ENCODE measurements at regions of chr9 and their contacts with region 1.

Region 1: DNA sequence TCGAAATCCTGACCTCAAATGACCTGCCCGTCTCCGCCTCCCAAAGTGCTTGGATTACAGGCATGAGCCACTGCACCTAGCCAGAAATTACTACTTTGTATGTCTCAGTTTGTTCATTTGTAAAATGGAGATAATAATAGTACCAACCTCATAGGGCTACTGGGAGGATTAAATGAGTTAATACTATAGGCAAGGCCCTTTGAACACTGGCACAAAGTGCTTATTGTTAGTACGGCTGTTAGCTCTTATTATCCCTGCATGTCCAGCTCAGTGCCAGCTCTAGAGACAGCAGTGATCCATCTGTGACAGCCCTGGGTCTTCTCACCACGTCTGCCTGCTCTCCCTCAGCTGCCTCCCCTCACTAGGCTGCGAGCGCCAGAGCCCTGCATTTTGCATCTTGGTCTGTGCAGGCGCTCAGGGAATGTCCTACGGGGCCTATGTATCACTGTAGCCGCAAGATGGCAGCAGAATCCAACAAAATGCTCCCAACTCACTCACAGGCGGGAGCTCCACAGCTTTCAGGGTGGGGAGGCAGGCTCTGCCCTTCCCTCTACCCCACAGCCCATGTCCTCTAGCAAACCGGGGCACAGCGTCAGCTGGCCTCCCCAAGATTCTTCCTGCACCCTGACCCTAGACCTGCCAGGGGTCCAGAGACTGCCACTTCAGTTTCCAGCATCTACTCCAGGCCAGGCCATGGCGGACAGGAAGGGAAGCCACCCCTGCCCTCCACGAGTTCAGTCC is 17.7 kb upstream of the AKNA start:
- DNase-seq: peak; percentile 79 to 87
- H3K4me3 ChIP-seq: no peak overlapping the region
- H3K27ac ChIP-seq: no peak overlapping the region
- H3K4me1 ChIP-seq: peaks cover 0 to 5% (median 0%) of the 10 kb centered on the region in 4 donors
- H3K27me3 ChIP-seq: no peaks in the 10 kb centered on the region
- CTCF ChIP-seq: peak; percentile 80 to 88

Region 2: GRCh38 chr9:114151426-114151955 is 254.0 kb before region 1 on chr9:
- intact Hi-C with region 1: no loop called
- DNase-seq: no peak
- H3K4me3 ChIP-seq: no peak overlapping the region
- H3K27ac ChIP-seq: no peak overlapping the region
- H3K4me1 ChIP-seq: peaks cover 0 to 26% (median 24%) of the 10 kb centered on the region in 4 donors
- H3K27me3 ChIP-seq: peaks cover 0 to 45% of the 10 kb centered on the region in 2 donors
- CTCF ChIP-seq: no peak

Region 3: DNA sequence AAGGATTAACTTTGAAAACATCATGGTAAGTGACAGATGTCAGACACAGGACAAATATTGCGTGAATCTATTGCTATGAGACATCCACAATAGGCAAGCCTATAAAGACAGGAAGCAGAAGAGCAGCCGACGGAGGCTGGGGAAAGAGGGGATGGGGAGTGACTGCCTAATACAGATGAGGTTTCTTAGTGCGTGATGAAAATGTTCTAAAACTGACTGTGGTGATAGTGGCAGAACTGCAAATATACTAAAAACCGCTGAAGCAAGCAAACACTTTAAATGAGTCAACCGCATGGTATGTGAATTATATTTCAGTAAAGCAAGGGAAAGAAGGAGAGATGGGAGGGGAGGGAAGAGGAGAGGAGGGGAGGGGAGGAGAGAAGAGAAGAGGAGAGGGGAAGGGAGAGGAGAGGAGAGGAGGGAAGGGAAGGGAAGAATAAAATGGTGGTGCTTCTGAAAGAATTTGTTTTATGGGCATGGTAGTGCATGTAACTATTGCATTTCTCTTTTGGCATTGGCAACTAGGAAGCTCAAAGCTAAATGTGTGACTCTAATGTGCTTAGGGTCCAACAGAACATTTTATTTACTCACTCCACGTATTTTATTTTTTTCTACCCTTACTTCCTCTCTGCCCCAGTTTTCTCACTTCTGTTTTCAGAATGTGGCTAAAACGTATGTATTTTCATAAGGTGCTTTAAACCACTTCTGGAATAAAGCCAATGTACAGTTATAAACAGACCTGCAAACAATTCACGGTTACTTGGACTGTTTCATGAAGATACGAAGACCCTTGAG is 38.9 kb before region 1 on chr9:
- intact Hi-C with region 1: no loop called
- DNase-seq: no peak
- H3K4me3 ChIP-seq: no peak overlapping the region
- H3K27ac ChIP-seq: peak overlapping the region; percentile 49 to 57
- H3K4me1 ChIP-seq: peaks cover 0 to 20% (median 15%) of the 10 kb centered on the region in 4 donors
- H3K27me3 ChIP-seq: no peaks in the 10 kb centered on the region
- CTCF ChIP-seq: no peak

Region 4: GRCh38 chr9:114460513-114461199 is 55.2 kb after region 1 on chr9:
- intact Hi-C with region 1: no loop called
- DNase-seq: no peak
- H3K4me3 ChIP-seq: no peak overlapping the region
- H3K27ac ChIP-seq: no peak overlapping the region
- H3K4me1 ChIP-seq: no peaks in the 10 kb centered on the region
- H3K27me3 ChIP-seq: no peaks in the 10 kb centered on the region
- CTCF ChIP-seq: no peak

Region 5: GRCh38 chr9:114505187-114506081 is 100.0 kb after region 1 on chr9 and contains the start of gene WHRN:
- intact Hi-C with region 1: loop called (anchors 10 kb)
- DNase-seq: peak; percentile 87 to 89
- H3K4me3 ChIP-seq: peak within 1 kb of the TSS; percentile 49 to 54
- H3K27ac ChIP-seq: no peak within 1 kb of the TSS
- H3K4me1 ChIP-seq: peaks cover 0 to 23% (median 15%) of the 10 kb centered on the region in 4 donors
- H3K27me3 ChIP-seq: peaks cover 0 to 80% of the 10 kb centered on the region in 2 donors
- CTCF ChIP-seq: no peak

Region 6: DNA sequence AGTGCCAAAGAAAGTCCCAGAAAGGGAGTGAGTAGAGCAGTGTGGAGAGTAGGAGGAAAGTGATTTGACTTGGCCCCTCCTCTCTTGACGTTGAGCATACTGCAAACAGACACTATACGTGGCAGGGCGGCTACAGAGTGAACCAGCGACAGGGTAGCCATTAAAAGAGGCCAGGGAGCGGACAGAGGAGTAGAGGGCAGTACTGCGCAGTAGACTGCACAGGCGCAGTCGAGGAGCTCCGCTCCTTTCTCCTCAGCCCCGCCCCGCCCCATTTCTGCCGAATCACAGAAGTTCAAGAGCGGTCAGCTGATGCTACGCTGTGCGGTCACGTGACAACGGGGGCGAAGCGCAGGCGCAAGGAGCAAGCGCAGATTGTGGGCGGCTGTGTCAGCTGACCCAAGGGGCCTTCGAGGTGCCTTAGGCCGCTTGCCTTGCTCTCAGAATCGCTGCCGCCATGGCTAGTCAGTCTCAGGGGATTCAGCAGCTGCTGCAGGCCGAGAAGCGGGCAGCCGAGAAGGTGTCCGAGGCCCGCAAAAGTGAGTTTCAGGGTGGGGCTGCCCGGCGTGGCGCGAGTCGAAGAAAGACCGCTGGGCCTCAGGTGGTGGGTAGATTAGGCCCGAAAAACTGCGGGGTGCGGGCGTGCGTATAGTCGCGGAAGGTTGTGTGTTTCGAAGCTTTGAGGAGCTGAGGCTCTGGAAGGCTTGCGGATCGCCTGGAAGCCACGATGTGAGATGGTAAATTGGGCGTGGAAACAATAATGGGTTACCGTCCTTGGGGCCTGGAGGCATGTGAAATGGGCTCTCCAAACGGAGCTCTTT is 182.1 kb after region 1 on chr9 and contains the start of gene ATP6V1G1:
- intact Hi-C with region 1: loop called (anchors 10 kb)
- DNase-seq: peak; percentile 100
- H3K4me3 ChIP-seq: peak within 1 kb of the TSS; percentile 88 to 92
- H3K27ac ChIP-seq: peak within 1 kb of the TSS; percentile 90 to 92
- H3K4me1 ChIP-seq: peaks cover 0 to 48% (median 35%) of the 10 kb centered on the region in 4 donors
- H3K27me3 ChIP-seq: no peaks in the 10 kb centered on the region
- CTCF ChIP-seq: no peak

Region 7: DNA sequence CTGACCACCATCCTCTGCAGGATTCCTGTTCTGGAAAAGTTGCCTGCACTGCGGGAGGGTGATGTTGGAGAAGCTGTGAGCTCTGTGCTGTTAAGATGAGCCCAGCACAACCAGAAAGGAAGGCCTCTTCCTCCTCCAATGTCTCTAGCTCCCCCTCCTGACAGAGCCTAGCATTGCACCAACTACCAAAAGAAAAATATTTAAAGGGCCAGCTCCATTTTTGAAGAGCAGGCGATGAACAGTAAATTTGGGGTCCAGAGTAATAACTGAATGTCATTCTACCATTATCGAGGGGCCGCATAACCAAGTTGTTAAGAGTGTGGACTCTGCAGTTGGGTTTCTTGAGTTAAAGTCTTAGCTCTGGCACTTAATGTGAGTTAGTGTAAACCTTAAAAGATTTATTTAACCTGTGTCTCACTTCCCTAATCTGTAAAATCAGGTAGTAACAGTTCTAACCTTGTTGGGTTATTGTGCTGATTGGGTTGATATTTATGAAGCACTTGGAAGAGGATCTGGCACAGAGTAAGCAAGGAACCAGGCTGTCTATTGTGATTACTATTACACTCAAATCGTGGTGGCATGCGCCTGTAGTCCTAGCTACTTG is 248.2 kb after region 1 on chr9:
- intact Hi-C with region 1: loop called (anchors 2 kb)
- DNase-seq: peak; percentile 79 to 86
- H3K4me3 ChIP-seq: no peak overlapping the region
- H3K27ac ChIP-seq: no peak overlapping the region
- H3K4me1 ChIP-seq: peaks cover 0 to 2% (median 0%) of the 10 kb centered on the region in 4 donors
- H3K27me3 ChIP-seq: no peaks in the 10 kb centered on the region
- CTCF ChIP-seq: peak; percentile 78 to 79